Colonic mucosa (tissue), 4 donors: ENCODE measurements at regions of chr5 and their contacts with region 1.

Region 1: DNA sequence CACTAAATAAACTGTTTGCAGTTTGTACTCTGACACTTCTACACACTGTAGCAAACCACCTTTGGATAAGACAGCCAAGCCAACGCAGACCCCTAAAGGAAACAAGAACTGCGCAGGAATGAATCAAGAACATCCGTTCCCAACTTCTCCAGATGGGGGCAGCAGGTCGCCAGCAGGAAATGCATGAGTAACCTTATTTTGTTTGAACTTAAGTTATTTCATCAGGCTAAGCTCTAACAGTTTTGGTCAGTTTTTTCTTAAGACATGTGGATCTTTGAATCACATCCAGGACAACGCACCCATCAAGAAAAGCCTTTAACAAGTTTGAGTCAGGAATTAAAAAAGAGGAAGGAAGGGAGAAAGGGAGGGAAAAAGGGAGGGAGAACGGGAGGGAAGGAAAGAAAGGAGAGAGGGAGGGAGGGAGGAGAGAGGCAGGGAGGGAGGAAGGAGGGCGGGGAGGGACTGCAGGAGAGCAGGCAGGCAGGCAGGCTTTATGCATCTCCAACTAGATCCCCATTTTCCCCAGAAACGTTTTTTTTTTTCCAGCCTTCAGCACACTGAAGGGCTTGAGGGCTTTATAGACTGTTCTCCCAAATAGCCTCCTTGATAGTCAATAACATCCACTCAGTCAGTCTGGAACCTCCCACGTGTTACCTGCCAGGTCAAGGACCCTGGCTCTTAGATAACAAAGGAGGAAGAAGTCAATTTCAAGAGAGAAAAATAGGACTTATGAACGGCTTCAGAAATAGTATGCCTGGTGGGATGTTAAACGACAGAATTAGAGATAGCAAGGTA is 22.2 kb downstream of the BHMT start:
- DNase-seq: peak; percentile 72
- H3K4me3 ChIP-seq: peak overlapping the region; percentile 17
- H3K27ac ChIP-seq: no peak overlapping the region
- H3K4me1 ChIP-seq: no peaks in the 10 kb centered on the region
- H3K27me3 ChIP-seq: no peaks in the 10 kb centered on the region
- CTCF ChIP-seq: peak; percentile 50

Region 2: GRCh38 chr5:78899922-78900362 is 233.9 kb before region 1 on chr5:
- intact Hi-C with region 1: loop called (anchors 5 kb)
- DNase-seq: peak; percentile 52
- H3K4me3 ChIP-seq: no peak overlapping the region
- H3K27ac ChIP-seq: no peak overlapping the region
- H3K4me1 ChIP-seq: no peaks in the 10 kb centered on the region
- H3K27me3 ChIP-seq: no peaks in the 10 kb centered on the region
- CTCF ChIP-seq: peak; percentile 68

Region 3: DNA sequence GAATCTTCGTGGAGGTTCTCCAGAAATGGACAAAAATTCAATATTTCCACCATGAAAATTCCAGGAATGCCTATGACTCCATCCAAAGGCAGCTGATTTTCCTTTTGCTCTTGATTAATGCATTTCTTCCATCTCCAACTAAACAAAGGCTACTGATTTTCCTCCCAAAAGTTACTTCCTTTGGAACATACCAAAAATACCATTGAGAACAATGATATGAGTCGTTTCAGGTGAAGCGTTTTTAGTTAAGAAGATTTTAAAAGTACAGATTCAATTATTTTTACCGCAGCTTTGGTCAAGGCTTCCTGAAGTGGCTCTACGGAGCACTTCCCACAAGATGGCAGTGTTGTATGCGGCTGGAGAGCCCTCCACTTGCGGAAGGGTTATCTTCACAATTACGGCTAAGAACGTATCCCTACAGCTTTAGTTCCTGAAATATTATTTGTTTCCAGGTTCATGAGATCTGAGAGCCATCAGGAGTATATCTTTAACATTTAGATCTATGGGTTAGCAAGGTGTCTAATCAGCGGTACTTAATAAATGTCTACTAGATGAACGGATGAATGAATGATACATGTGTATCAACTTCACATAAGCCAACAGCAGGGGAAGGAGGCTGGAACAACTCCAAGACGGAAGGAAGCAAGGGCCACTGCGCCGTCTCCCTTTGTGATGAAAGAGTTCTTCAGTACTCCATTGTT is 112.8 kb before region 1 on chr5:
- intact Hi-C with region 1: loop called (anchors 1 kb)
- DNase-seq: peak; percentile 60
- H3K4me3 ChIP-seq: no peak overlapping the region
- H3K27ac ChIP-seq: no peak overlapping the region
- H3K4me1 ChIP-seq: no peaks in the 10 kb centered on the region
- H3K27me3 ChIP-seq: no peaks in the 10 kb centered on the region
- CTCF ChIP-seq: peak; percentile 59

Region 4: GRCh38 chr5:79200573-79201183 is 66.8 kb after region 1 on chr5:
- intact Hi-C with region 1: no loop called
- DNase-seq: no peak
- H3K4me3 ChIP-seq: no peak overlapping the region
- H3K27ac ChIP-seq: no peak overlapping the region
- H3K4me1 ChIP-seq: no peaks in the 10 kb centered on the region
- H3K27me3 ChIP-seq: no peaks in the 10 kb centered on the region
- CTCF ChIP-seq: peak; percentile 21

Region 5: DNA sequence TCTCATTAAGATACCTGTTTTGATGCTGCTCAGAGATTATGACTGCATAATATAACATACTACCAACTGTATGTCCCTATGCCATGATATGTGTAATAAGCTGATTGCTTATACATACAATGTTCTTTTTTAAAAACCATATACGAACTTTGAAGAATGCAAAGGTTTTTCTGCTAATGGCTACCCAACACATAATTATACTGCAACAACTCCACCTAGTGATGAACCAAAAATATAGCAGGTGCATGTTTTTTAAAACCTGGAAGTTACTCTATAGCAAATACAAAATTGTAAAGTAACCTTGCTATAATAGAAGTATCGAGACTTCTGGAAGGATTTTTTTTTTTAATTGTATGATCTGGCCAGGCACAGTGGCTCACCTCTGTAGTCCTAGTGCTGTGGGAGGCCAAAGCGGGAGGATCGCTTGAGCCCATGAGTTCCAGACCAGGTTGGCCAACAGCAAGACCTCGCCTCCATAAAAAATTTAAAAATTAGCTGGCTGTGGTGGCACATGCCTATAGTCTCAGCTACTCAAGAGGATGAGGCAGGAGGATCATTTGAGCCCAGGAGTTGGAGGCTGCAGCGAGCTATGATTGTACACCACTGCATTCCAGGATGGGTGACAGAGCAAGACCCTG is 331.0 kb after region 1 on chr5:
- intact Hi-C with region 1: loop called (anchors 5 kb)
- DNase-seq: no peak
- H3K4me3 ChIP-seq: no peak overlapping the region
- H3K27ac ChIP-seq: no peak overlapping the region
- H3K4me1 ChIP-seq: no peaks in the 10 kb centered on the region
- H3K27me3 ChIP-seq: no peaks in the 10 kb centered on the region
- CTCF ChIP-seq: peak; percentile 65